Activated CD8-positive, alpha-beta T cell treated with anti-CD3 and anti-CD28 coated beads for 36 hours (primary cell): ENCODE measurements at regions of chr3 and their contacts with region 1.

Region 1: GRCh38 chr3:71444028-71444860 is 139.3 kb downstream of the FOXP1 start:
- DNase-seq: peak; percentile 82
- ATAC-seq: peak; percentile 63
- H3K4me3 Mint-ChIP-seq: peak overlapping the region; percentile 73
- H3K27ac Mint-ChIP-seq: peak overlapping the region; percentile 100
- H3K4me1 Mint-ChIP-seq: peaks cover 89% of the 10 kb centered on the region
- H3K27me3 Mint-ChIP-seq: no peaks in the 10 kb centered on the region
- CTCF ChIP-seq: no peak

Region 2: DNA sequence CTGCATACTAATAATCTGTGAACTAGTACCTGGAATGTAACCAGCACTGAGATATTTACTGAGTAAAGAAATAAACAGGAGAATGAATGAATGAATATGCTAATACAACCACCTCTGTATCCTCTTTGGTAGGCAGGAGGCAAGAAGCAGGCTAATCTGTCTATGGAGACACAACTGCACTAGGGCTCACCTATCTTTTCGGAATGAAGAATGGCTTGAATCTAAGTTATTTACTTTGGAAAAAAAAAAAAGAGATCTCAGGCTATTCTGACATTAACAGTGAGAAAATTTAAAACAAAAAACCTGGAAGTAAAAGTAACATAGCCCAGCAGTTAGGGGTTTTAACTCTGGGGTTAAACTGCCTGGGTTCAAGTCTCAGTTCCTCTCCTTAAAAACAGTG is 34.9 kb before region 1 on chr3:
- CTCF ChIA-PET with region 1: no interaction called
- POLR2A ChIA-PET with region 1: no interaction called
- intact Hi-C with region 1: no loop called
- DNase-seq: no peak
- ATAC-seq: no peak
- H3K4me3 Mint-ChIP-seq: no peak overlapping the region
- H3K27ac Mint-ChIP-seq: no peak overlapping the region
- H3K4me1 Mint-ChIP-seq: peaks cover 80% of the 10 kb centered on the region
- H3K27me3 Mint-ChIP-seq: no peaks in the 10 kb centered on the region
- CTCF ChIP-seq: no peak

Region 3: GRCh38 chr3:71423151-71423906 is 20.9 kb before region 1 on chr3:
- CTCF ChIA-PET with region 1: interaction called, 5 read pairs
- POLR2A ChIA-PET with region 1: interaction called, 64 read pairs
- intact Hi-C with region 1: no loop called
- DNase-seq: no peak
- ATAC-seq: no peak
- H3K4me3 Mint-ChIP-seq: no peak overlapping the region
- H3K27ac Mint-ChIP-seq: peak overlapping the region; percentile 90
- H3K4me1 Mint-ChIP-seq: peaks cover 93% of the 10 kb centered on the region
- H3K27me3 Mint-ChIP-seq: no peaks in the 10 kb centered on the region
- CTCF ChIP-seq: no peak

Region 4: GRCh38 chr3:71430941-71431552 is 13.2 kb before region 1 on chr3:
- CTCF ChIA-PET with region 1: interaction called, 10 read pairs
- POLR2A ChIA-PET with region 1: interaction called, 64 read pairs
- intact Hi-C with region 1: no loop called
- DNase-seq: no peak
- ATAC-seq: peak; percentile 68
- H3K4me3 Mint-ChIP-seq: no peak overlapping the region
- H3K27ac Mint-ChIP-seq: peak overlapping the region; percentile 97
- H3K4me1 Mint-ChIP-seq: peaks cover 86% of the 10 kb centered on the region
- H3K27me3 Mint-ChIP-seq: no peaks in the 10 kb centered on the region
- CTCF ChIP-seq: no peak

Region 5: GRCh38 chr3:71517271-71517791 is 73.1 kb after region 1 on chr3:
- CTCF ChIA-PET with region 1: no interaction called
- POLR2A ChIA-PET with region 1: no interaction called
- intact Hi-C with region 1: no loop called
- DNase-seq: no peak
- ATAC-seq: no peak
- H3K4me3 Mint-ChIP-seq: no peak overlapping the region
- H3K27ac Mint-ChIP-seq: no peak overlapping the region
- H3K4me1 Mint-ChIP-seq: peaks cover 11% of the 10 kb centered on the region
- H3K27me3 Mint-ChIP-seq: no peaks in the 10 kb centered on the region
- CTCF ChIP-seq: no peak